Gastrocnemius medialis (tissue), 4 donors: ENCODE measurements at regions of chr1 and their contacts with region 1.

Region 1: DNA sequence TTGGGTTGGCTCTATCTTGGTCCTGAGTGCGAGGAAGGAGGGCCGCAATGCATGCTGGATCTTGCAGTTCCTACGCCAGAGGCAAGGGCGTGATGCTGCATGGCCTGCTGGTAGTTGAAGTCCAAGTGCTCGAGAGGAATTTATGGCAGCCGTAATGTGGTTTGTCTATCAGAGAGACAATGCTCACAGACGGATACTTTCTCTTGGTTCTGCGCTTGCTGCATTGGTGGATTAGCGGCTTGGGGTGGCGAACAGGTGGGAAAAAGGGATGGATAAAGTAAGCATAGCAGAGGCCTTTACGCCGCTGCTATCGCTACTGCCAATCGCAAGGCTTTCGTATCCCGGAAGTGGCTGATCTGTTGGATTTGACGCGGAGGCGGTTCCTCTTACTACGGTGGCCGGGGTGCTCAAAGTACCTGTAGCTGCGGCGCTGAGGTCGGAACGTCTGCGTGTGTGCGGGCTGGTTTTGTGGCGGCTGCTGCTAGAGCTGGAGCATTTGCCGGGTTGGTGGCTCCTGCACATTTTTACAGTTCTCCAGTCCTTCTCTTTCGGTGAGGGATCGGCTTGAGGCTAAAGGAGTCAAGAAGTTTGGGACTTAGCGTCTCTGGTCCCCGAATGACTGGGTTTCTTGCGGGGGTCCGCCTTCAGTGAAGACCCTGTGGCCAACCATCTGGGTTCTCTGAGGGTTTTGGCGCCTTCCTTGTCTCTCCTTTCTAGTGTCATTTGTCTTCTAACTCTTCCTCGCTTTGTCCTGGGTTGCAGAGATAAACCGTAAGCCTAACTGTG is at the start of gene ATG4C:
- DNase-seq: peak; percentile 94 to 95
- ATAC-seq: peak; percentile 99
- H3K4me3 ChIP-seq: peak within 1 kb of the TSS; percentile 75 to 94 (median 88)
- H3K27ac ChIP-seq: peak within 1 kb of the TSS; percentile 89 to 97 (median 94)
- H3K4me1 ChIP-seq: peaks cover 9 to 13% of the 10 kb centered on the region in 2 donors
- H3K27me3 ChIP-seq: no peaks in the 10 kb centered on the region
- CTCF ChIP-seq: peak in 2 of 5 experiments; percentile 20 to 21
- POLR2A ChIP-seq: peak in 1 of 2 donors; percentile 36
- total RNA-seq, gene ATG4C: 2.5 to 5.8 (median 4.5) TPM

Region 2: GRCh38 chr1:61724813-61725694 is 1058.9 kb before region 1 on chr1 and contains the start of gene TM2D1:
- in situ Hi-C with region 1: loop called in 1 of 4 experiments (anchors 25 kb)
- intact Hi-C with region 1: no loop called
- DNase-seq: peak; percentile 81 to 85
- ATAC-seq: peak; percentile 99
- H3K4me3 ChIP-seq: peak within 1 kb of the TSS; percentile 86 to 98 (median 96)
- H3K27ac ChIP-seq: peak within 1 kb of the TSS; percentile 91 to 96 (median 94)
- H3K4me1 ChIP-seq: peaks cover 17 to 18% of the 10 kb centered on the region in 2 donors
- H3K27me3 ChIP-seq: no peaks in the 10 kb centered on the region
- CTCF ChIP-seq: no peak
- POLR2A ChIP-seq: peak; percentile 64 to 77
- total RNA-seq, gene TM2D1: 33.6 to 56.8 (median 38.5) TPM

Region 3: GRCh38 chr1:62436466-62437256 is 347.3 kb before region 1 on chr1 and contains the start of gene USP1:
- in situ Hi-C with region 1: no loop called
- intact Hi-C with region 1: loop called (anchors 2 kb)
- DNase-seq: peak; percentile 96 to 98
- ATAC-seq: peak; percentile 91 to 92
- H3K4me3 ChIP-seq: peak within 1 kb of the TSS; percentile 87 to 94 (median 92)
- H3K27ac ChIP-seq: peak within 1 kb of the TSS; percentile 94 to 99 (median 99)
- H3K4me1 ChIP-seq: peaks cover 22 to 32% of the 10 kb centered on the region in 2 donors
- H3K27me3 ChIP-seq: no peaks in the 10 kb centered on the region
- CTCF ChIP-seq: no peak
- POLR2A ChIP-seq: peak; percentile 54 to 77
- total RNA-seq, gene USP1: 11.8 to 23.4 (median 17.3) TPM

Region 4: DNA sequence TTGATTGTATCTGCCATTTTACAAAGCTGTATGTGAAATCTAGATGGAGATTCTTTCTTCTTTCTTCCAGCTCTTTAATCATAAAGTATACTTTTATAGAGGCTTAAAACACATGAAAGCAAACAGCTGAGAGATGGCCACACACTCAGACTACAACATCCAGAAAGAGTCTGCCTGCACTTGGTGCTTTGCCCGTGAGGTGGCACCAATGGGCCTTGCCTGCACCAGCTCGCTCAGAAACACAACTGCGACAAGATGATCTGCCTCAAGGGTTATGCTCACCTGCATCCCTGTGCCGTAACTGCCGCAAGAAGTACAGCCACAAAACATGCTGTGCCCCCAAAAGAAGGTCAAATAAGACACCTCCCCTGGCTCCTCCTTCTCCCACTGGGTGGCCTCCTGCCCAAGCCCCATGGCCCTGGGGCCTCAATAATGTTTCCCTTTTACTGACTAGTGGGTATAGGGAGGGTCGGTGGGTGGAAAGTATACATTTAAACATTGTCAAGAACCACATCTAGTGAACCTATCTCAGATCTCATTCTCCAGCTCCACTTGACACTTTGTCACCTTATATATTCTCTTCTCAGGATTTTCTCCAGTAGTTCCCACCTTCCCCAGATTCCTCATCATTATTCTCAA is 253.3 kb before region 1 on chr1:
- in situ Hi-C with region 1: no loop called
- intact Hi-C with region 1: no loop called
- DNase-seq: no peak
- ATAC-seq: no peak
- H3K4me3 ChIP-seq: no peak overlapping the region
- H3K27ac ChIP-seq: no peak overlapping the region
- H3K4me1 ChIP-seq: no peaks in the 10 kb centered on the region
- H3K27me3 ChIP-seq: no peaks in the 10 kb centered on the region
- CTCF ChIP-seq: peak in 2 of 5 experiments; percentile 15 to 22
- POLR2A ChIP-seq: no peak

Region 5: DNA sequence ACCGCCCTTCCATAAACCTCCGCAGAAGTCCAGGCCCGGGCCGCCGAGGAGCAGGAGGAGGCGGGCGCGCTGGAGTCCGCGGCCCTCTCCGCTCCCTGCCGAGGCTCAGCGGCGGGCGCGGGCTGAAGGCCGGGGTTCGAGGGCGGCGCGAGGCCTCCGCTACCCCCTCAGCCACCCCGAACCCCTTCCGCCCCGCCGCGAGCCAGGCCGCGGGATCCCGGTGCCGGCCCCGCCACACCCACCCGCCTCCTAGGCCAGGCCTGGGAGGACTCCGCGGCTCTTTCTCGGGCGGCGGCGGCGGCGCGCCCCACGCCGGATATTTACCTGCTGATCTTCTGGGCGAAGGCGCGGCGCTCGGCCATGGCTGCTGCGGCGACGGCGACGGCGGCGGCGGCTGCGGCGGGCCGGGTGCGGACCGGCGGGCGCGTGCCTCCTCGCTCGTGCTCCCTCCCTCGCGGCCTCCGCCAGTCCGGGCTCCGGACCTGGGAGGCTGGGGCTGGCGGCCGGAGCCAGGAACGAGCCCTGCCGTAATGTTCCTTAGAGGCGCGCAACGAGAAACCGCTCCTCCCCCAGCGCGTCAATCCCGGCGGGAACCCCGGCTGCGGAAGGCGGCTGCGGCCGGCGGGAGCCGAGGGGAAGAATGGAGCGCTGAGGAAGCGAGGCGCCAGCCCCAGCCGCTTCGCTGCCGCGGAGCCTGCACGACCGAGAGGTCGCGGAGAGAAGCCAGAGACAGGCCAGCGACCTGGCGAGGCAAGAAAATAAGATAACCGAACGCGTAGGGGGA is 95.8 kb before region 1 on chr1 and contains the start of gene DOCK7:
- in situ Hi-C with region 1: no loop called
- intact Hi-C with region 1: loop called (anchors 2 kb)
- DNase-seq: peak; percentile 61 to 65
- ATAC-seq: peak; percentile 91 to 93
- H3K4me3 ChIP-seq: peak within 1 kb of the TSS; percentile 66 to 87 (median 80)
- H3K27ac ChIP-seq: peak within 1 kb of the TSS; percentile 64 to 81 (median 76)
- H3K4me1 ChIP-seq: peaks cover 2 to 15% of the 10 kb centered on the region in 2 donors
- H3K27me3 ChIP-seq: no peaks in the 10 kb centered on the region
- CTCF ChIP-seq: no peak
- POLR2A ChIP-seq: peak; percentile 37 to 44
- total RNA-seq, gene DOCK7: 7.9 to 14.7 (median 10.9) TPM

Region 6: DNA sequence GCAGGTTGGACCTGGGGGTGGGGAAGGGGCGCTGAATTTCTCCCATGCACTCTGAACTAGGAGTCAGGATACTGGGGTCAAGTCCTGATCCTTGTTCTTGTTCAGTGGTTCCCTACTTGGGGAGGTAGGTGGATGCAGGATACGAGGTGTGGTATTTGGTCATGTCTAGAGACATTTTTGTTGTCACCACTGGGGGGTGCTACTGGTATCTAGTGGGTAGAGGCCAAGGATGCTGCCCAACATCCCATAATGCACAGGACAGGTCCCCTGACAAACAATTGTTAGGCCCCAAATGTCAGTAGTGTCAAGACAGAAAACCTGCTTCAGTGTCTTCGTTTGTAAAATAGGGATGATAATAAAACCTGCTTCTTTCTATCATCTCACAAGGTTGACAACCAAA is 279.5 kb after region 1 on chr1:
- in situ Hi-C with region 1: no loop called
- intact Hi-C with region 1: no loop called
- DNase-seq: no peak
- ATAC-seq: no peak
- H3K4me3 ChIP-seq: no peak overlapping the region
- H3K27ac ChIP-seq: no peak overlapping the region
- H3K4me1 ChIP-seq: no peaks in the 10 kb centered on the region
- H3K27me3 ChIP-seq: no peaks in the 10 kb centered on the region
- CTCF ChIP-seq: no peak
- POLR2A ChIP-seq: no peak